ENCODE measurements at regions of chr15 and their contacts with region 1.

Region 1: GRCh38 chr15:41543521-41543870 is 561 bp downstream of the RPAP1 start:
- DNase-seq: no peak
- H3K27ac ChIP-seq: peak overlapping the region; percentile 81
- CTCF ChIP-seq: no peak

Region 2: DNA sequence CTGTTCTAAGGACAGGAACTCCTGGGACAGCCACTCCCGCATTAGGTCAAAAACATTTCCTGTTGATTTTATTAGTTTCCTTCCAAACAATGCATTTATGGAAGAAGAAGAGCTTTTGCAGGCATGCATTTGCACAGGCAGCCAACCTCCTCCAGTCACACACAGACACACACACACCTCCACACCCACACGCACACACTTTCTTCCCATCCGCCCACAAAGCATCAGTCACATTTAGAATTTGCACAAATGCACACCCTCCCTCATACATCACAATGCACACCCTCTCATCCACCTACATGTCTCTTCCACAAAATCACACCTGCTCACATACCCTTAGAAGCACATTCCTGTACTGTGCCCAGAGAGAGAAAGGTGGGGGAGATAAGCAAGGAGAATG is 11.4 kb after region 1 on chr15:
- CTCF ChIA-PET with region 1: interaction called, 4 read pairs
- POLR2A ChIA-PET with region 1: interaction called, 12 read pairs
- DNase-seq: no peak
- H3K27ac ChIP-seq: no peak overlapping the region
- CTCF ChIP-seq: no peak

Region 3: DNA sequence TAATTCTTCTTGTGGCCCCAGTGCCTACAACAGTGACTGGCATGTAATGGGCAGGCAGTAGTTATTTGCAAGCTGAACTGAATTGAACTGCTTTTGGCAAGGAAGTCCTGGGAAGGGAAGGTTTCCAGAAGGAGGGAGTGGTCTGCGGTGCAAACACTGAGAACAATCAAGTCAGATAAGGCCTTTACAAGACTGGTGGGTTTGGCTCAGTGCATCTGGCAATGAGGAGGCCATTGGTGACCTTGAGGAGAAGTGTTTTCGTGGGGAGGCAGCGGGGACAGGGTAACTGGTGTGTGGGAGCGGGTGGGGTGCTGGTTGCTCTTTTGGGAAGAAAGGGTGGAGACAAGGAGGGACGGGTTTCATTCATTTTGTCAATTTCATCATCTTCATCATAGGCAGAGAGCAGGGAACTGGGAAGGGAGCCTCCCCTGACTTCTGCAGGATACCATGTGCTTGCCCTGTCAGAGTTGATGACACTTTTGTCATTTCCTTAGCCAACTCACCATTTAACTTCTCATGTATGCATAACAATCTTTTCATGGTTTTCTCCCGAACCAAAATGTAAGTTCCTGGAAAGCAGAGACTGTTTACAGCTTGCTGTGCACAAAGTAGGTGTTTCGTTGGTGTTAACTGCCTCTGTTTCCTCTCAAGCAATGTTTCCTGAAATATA is 437.3 kb after region 1 on chr15:
- CTCF ChIA-PET with region 1: no interaction called
- POLR2A ChIA-PET with region 1: no interaction called
- DNase-seq: no peak
- H3K27ac ChIP-seq: no peak overlapping the region
- CTCF ChIP-seq: no peak

Measured in RWPE1 (cell line).